SK-MEL-5 (cell line): ENCODE measurements at regions of chr5 and their contacts with region 1.

Region 1: GRCh38 chr5:82225525-82226172 is 52.5 kb downstream of the RPS23 start:
- DNase-seq: peak; percentile 79

Region 2: GRCh38 chr5:82011761-82012160 is 213.9 kb before region 1 on chr5:
- in situ Hi-C with region 1: no loop called
- DNase-seq: no peak

Region 3: GRCh38 chr5:82176115-82176814 is 49.4 kb before region 1 on chr5:
- in situ Hi-C with region 1: loop called (anchors 5 kb)
- DNase-seq: no peak

Region 4: GRCh38 chr5:82549263-82549662 is 323.6 kb after region 1 on chr5:
- in situ Hi-C with region 1: no loop called
- DNase-seq: no peak